Endothelial cell of umbilical vein (primary cell): ENCODE measurements at regions of chr3 and their contacts with region 1.

Region 1: DNA sequence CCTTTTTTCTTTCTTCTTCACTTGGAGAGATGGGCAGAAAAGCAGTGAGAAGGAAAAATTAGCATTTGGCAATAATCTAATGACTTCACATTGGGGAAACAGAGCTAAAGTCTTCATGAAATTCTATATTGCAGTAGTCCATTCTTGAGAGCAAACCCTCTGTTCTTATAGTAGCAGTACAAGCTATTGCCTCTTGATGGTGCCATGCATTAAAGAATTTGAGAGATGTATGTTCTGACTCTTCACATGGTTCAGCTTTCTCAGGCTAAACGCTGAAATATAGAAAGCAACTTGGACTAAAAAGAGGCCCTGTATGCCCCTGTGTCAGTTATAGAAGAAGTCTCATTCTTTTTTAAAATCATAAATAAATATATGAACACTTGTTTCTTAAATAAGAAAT is 36.0 kb downstream of the PHLDB2 start:
- DNase-seq: peak; percentile 84
- H3K4me3 ChIP-seq: no peak overlapping the region
- H3K27ac ChIP-seq: no peak overlapping the region
- H3K4me1 ChIP-seq: peaks cover 9% of the 10 kb centered on the region
- H3K27me3 ChIP-seq: no peaks in the 10 kb centered on the region
- CTCF ChIP-seq: peak; percentile 55 to 57
- POLR2A ChIP-seq: no peak

Region 2: GRCh38 chr3:111668912-111669488 is 226.1 kb before region 1 on chr3:
- CTCF ChIA-PET with region 1: interaction called, 6 read pairs
- POLR2A ChIA-PET with region 1: no interaction called
- dilution Hi-C with region 1: no loop called
- intact Hi-C with region 1: loop called (anchors 1 kb)
- DNase-seq: peak; percentile 63
- H3K4me3 ChIP-seq: no peak overlapping the region
- H3K27ac ChIP-seq: peak overlapping the region; percentile 29
- H3K4me1 ChIP-seq: peaks cover 31% of the 10 kb centered on the region
- H3K27me3 ChIP-seq: no peaks in the 10 kb centered on the region
- CTCF ChIP-seq: peak; percentile 61
- POLR2A ChIP-seq: no peak

Region 3: GRCh38 chr3:111936191-111936841 is 41.2 kb after region 1 on chr3:
- CTCF ChIA-PET with region 1: interaction called, 20 read pairs
- POLR2A ChIA-PET with region 1: no interaction called
- dilution Hi-C with region 1: no loop called
- intact Hi-C with region 1: no loop called
- DNase-seq: peak; percentile 84
- H3K4me3 ChIP-seq: peak overlapping the region in 2 of 3 experiments; percentile 15 to 28
- H3K27ac ChIP-seq: peak overlapping the region; percentile 99
- H3K4me1 ChIP-seq: peaks cover 70% of the 10 kb centered on the region
- H3K27me3 ChIP-seq: no peaks in the 10 kb centered on the region
- CTCF ChIP-seq: no peak
- POLR2A ChIP-seq: no peak

Region 4: GRCh38 chr3:111978493-111979433 is 83.7 kb after region 1 on chr3 and contains the start of gene ABHD10:
- CTCF ChIA-PET with region 1: interaction called, 26 read pairs
- POLR2A ChIA-PET with region 1: no interaction called
- dilution Hi-C with region 1: no loop called
- intact Hi-C with region 1: no loop called
- DNase-seq: peak; percentile 99
- H3K4me3 ChIP-seq: peak within 1 kb of the TSS; percentile 80 to 96 (median 96)
- H3K27ac ChIP-seq: peak within 1 kb of the TSS; percentile 33
- H3K4me1 ChIP-seq: peaks cover 21% of the 10 kb centered on the region
- H3K27me3 ChIP-seq: no peaks in the 10 kb centered on the region
- CTCF ChIP-seq: no peak
- POLR2A ChIP-seq: peak; percentile 90
- total RNA-seq, gene ABHD10: 26.2 and 37.0 TPM in 2 replicates

Region 5: GRCh38 chr3:111999484-112000324 is 104.6 kb after region 1 on chr3:
- CTCF ChIA-PET with region 1: no interaction called
- POLR2A ChIA-PET with region 1: no interaction called
- dilution Hi-C with region 1: no loop called
- intact Hi-C with region 1: no loop called
- DNase-seq: no peak
- H3K4me3 ChIP-seq: peak overlapping the region in 1 of 3 experiments; percentile 11
- H3K27ac ChIP-seq: no peak overlapping the region
- H3K4me1 ChIP-seq: peaks cover 10% of the 10 kb centered on the region
- H3K27me3 ChIP-seq: no peaks in the 10 kb centered on the region
- CTCF ChIP-seq: no peak
- POLR2A ChIP-seq: no peak

Region 6: DNA sequence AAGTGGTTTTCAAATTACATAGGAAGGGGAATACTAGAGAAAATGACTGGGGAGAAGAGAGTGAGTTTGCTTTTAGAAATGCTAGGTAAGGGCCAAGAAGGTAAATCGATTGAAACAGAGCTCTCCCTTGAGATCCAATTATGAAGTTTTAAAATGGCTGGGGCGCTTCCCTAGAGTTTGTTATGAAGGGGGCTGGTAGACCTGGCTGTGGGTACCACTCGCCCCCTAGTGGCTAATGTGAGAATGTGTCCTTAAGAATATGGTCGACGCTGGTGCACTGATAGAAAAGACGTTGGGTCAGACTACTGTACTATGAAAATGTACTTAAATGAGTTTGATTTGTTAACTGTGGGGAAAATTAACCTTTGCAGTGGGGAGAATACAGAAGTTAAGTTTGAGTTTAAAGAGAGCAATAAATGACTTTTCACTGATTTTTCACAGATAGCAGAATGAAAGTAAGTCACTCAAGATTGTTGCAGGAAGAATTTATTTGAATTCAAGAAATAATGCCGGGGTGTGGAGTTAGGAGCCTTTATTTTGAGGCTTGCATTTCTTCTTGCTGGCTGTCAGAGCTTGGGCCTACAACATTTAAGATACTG is 148.6 kb after region 1 on chr3:
- CTCF ChIA-PET with region 1: interaction called, 10 read pairs
- POLR2A ChIA-PET with region 1: no interaction called
- dilution Hi-C with region 1: no loop called
- intact Hi-C with region 1: loop called (anchors 1 kb)
- DNase-seq: peak; percentile 71
- H3K4me3 ChIP-seq: no peak overlapping the region
- H3K27ac ChIP-seq: no peak overlapping the region
- H3K4me1 ChIP-seq: no peaks in the 10 kb centered on the region
- H3K27me3 ChIP-seq: no peaks in the 10 kb centered on the region
- CTCF ChIP-seq: peak; percentile 80 to 85
- POLR2A ChIP-seq: no peak